ENCODE measurements at regions of chr16 and their contacts with region 1.

Region 1: DNA sequence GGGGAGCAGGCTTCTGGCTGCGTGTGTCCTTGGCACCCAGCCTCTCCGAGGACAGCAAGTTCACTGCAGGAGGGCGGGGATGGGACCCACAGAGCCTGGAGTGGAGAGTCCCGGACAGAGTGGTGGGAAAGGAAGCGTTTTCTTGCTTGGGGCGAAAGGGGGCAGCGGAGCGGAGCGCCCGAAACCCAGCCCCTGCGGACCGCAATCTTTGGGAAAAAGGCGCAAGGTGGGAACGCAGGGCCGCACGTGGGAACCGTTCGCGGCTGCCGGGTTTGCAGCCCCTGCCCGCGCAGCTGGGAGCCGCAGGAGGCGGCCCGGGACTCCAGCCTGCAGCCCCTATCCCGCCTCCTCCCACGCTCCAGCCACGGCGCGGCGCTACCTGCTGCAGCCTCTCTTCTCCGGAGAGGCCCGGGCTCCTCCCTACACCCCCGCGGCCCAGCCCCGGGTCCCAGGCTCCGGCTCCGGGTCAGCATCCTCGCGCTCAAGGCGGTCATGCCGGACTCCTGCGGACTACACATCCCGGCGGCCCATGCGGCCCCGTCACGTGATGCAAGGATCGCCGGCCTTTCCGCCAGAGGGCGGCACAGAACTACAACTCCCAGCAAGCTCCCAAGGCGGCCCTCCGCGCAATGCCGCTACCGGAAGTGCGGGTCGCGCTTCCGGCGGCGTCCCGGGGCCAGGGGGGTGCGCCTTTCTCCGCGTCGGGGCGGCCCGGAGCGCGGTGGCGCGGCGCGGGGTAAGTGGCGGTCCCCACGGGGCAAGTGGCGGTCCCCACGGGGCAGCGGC is at the starts of genes NTHL1 and TSC2:
- DNase-seq: peak; percentile 92 to 95 (median 94)
- H3K4me3 ChIP-seq: peak within 1 kb of the TSS; percentile 75 to 93 (median 88)
- H3K27ac ChIP-seq: peak within 1 kb of the TSS; percentile 30 to 83
- H3K4me1 ChIP-seq: peaks cover 2 to 45% (median 34%) of the 10 kb centered on the region in 4 experiments
- H3K27me3 ChIP-seq: no peaks in the 10 kb centered on the region

Region 2: DNA sequence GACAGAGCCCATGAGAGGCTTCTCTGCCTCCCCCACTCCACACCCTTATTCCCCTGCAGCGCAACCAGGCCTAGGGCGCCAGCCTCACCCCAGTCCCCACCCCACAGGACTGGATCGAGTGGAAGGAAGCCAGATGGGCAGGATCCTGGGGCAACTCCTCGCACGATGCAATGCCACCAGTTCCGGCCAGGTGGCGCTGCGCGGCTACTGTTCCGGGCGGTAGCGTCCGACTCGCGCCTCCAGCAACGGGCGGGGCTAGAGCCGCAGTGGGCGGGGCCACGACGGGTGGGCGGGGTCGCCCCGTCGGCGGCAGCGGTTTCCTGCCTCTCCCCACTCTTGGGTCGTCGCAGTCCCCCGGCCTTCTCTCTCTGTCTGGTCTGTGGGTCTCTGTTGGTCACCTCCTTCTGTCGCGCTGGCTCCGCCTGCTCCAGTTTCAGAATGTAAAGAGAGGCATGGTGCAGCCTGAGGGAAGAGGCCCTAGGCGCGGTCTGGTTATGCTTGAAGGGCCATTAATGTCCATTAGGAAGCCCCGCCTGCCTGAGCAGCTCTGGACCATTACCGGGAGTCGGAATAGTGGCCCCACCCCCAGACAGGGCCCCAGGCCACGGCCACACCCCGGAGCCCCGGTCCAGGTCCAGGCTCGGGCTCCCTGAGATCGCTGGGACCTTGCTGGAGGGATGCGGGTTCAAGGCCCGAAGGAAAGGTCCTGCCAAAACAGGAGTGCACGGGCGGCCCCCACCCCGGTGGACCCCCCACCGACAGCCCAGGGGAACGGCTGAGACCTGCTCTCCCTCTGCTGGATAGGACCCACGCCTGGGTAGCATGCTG is 24.2 kb before region 1 on chr16:
- CTCF ChIA-PET with region 1: interaction called, 12 read pairs
- POLR2A ChIA-PET with region 1: interaction called, 4 read pairs
- DNase-seq: peak; percentile 86 to 92 (median 91)
- H3K4me3 ChIP-seq: peak overlapping the region; percentile 11 to 74 (median 51)
- H3K27ac ChIP-seq: no peak overlapping the region
- H3K4me1 ChIP-seq: peaks cover 0 to 52% (median 38%) of the 10 kb centered on the region in 4 experiments
- H3K27me3 ChIP-seq: peaks cover 0 to 49% (median 8%) of the 10 kb centered on the region in 5 experiments

Measured in common myeloid progenitor, CD34-positive (primary cell).